GM10248 (cell line): ENCODE measurements at regions of chr19 and their contacts with region 1.

Region 1: GRCh38 chr19:10858204-10858828 is 10.1 kb downstream of the C19orf38 start:
- DNase-seq: peak; percentile 48
- CTCF ChIP-seq: peak; percentile 77

Region 2: GRCh38 chr19:10835754-10836477 is 22.4 kb before region 1 on chr19 and contains the start of gene TMED1:
- CTCF ChIA-PET with region 1: interaction called, 45 read pairs
- POLR2A ChIA-PET with region 1: no interaction called
- DNase-seq: peak; percentile 95
- CTCF ChIP-seq: no peak

Region 3: DNA sequence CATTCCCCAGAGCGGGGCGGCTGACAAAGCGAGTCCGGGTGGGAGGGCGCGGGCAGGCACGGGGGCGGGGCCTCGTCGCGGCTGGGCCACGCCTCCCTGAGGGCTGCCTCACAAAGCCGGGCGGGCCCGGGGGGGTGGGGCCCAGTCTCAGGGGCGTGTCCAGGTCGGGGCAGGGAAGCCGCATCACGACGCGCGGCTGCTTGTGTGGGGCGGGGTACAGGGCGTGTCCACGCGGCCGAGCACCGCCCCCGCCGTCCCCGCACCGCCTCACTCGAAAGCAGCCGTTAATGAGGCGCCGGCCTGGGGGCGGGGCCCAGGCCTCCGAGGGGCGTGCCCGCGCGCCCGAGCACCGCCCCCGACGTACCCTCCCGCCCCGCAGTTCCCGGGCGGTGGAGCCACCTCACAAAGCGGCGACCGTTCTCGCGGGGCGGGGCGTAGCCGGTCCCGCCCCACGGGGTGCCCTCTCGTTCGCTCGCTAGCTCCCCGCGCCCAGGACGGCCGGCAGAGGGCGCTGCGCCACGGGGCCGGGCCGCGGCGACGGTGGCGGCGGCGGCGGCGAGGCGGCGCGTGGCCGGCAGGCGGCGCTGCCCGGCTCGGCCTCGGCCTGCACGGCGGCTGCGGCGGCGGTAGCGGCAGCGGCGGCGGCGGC is 12.8 kb after region 1 on chr19 and contains the start of gene CARM1:
- CTCF ChIA-PET with region 1: interaction called, 71 read pairs
- POLR2A ChIA-PET with region 1: no interaction called
- DNase-seq: peak; percentile 100
- CTCF ChIP-seq: peak; percentile 98